Naive thymus-derived CD4-positive, alpha-beta T cell (primary cell): ENCODE measurements at regions of chr1 and their contacts with region 1.

Region 1: DNA sequence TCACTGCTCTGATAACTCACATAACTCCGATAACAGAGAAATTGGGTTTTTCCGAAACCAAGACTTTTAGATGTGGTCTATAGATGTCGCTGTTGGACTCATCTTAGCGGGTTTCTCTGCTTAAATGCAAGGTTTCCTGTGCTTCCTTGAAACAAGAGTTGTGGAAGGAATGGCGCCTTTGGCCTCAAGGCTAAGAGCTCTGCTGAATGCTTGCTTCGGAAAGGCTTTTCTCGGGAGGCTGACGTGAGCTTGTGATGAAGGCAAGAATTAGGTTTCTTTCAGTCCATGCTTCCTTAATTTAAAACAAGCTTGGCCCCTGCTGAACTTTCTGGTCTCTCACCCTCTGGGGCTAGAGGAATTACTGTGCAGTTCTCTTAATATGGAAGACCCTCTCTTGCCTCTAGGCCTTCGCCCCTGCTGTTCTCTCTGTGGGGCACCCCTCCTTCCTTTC is 113.5 kb downstream of the MAP3K21 start:
- DNase-seq: peak in 3 of 9 donors; percentile 2 to 19 (median 2)
- ATAC-seq: peak; percentile 32
- H3K4me3 ChIP-seq: no peak overlapping the region
- H3K4me3 Mint-ChIP-seq: no peak overlapping the region
- H3K27ac ChIP-seq: no peak overlapping the region
- H3K27ac Mint-ChIP-seq: no peak overlapping the region
- H3K4me1 ChIP-seq: no peaks in the 10 kb centered on the region
- H3K4me1 Mint-ChIP-seq: no peaks in the 10 kb centered on the region
- H3K27me3 ChIP-seq: no peaks in the 10 kb centered on the region
- H3K27me3 Mint-ChIP-seq: peaks cover 9 to 29% (median 26%) of the 10 kb centered on the region in 5 donors

Region 2: DNA sequence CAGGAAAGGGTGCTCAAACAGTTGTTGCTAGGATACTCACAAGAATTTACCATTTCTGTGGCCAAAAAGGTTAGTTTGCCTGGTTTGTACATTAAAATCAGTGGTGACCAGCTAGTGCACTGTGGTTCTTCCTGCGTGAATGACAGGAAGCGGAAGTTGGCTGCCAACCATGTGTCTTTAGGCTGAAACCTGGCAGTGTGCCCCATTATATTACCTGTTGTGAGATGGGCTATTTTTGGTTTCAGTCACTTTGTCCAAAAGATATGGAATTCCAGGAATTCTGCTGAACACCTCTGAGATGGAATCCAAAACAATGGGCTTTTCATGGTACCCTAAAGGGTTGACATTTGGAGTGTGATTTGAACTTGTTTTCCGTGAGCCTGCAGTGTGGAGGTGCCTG is 99.9 kb before region 1 on chr1:
- CTCF ChIA-PET with region 1: no interaction called
- POLR2A ChIA-PET with region 1: no interaction called
- intact Hi-C with region 1: no loop called
- DNase-seq: no peak
- ATAC-seq: no peak
- H3K4me3 ChIP-seq: no peak overlapping the region
- H3K4me3 Mint-ChIP-seq: no peak overlapping the region
- H3K27ac ChIP-seq: no peak overlapping the region
- H3K27ac Mint-ChIP-seq: no peak overlapping the region
- H3K4me1 ChIP-seq: no peaks in the 10 kb centered on the region
- H3K4me1 Mint-ChIP-seq: peaks cover 0 to 2% (median 0%) of the 10 kb centered on the region in 7 donors
- H3K27me3 ChIP-seq: no peaks in the 10 kb centered on the region
- H3K27me3 Mint-ChIP-seq: peaks cover 40 to 71% (median 57%) of the 10 kb centered on the region in 5 donors

Region 3: DNA sequence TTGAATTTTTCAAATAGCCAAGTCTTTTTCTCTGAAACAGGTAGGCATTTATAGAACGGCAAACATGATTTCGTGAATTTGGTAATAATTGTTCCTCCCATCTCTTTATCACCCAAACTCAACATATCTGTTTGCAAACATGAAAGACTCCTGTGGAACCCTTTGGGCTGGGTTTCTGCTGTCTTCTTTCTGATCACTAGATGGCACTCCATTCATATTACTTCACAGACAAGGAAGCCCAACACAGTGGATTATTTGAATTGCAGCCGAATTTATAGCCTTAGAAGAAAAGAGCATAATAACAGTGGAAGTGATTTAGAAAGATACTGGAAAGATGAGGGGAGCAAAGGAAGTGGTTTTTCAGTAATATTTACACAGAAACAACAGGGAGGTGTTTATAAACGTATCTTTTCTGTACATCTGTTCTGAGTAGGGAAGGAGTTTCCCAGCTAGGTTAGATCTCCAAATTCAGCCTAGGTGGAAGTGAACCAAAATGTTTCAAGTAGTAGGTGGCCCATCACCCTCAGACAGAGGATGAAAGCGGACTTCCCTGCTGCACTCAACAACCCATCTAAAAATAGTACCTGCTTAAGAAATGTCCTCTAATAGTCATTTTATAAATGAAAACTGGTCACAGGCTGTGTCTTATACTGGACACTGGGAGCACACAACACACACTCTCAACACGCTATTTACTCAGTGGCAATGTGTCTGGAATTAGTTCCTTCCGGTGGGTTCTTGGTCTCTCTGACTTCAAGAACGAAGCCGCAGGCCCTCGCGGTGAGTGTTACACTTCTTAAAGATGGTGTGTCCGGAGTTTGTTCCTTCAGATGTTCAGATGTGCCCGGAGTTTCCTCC is 45.9 kb before region 1 on chr1:
- CTCF ChIA-PET with region 1: no interaction called
- POLR2A ChIA-PET with region 1: no interaction called
- intact Hi-C with region 1: loop called in 1 of 2 experiments (anchors 2 kb)
- DNase-seq: peak in 5 of 9 donors; percentile 9 to 36 (median 17)
- ATAC-seq: peak; percentile 61
- H3K4me3 ChIP-seq: no peak overlapping the region
- H3K4me3 Mint-ChIP-seq: no peak overlapping the region
- H3K27ac ChIP-seq: no peak overlapping the region
- H3K27ac Mint-ChIP-seq: no peak overlapping the region
- H3K4me1 ChIP-seq: no peaks in the 10 kb centered on the region
- H3K4me1 Mint-ChIP-seq: no peaks in the 10 kb centered on the region
- H3K27me3 ChIP-seq: peaks cover 0 to 3% of the 10 kb centered on the region in 2 donors
- H3K27me3 Mint-ChIP-seq: peaks cover 27 to 45% (median 38%) of the 10 kb centered on the region in 5 donors

Region 4: DNA sequence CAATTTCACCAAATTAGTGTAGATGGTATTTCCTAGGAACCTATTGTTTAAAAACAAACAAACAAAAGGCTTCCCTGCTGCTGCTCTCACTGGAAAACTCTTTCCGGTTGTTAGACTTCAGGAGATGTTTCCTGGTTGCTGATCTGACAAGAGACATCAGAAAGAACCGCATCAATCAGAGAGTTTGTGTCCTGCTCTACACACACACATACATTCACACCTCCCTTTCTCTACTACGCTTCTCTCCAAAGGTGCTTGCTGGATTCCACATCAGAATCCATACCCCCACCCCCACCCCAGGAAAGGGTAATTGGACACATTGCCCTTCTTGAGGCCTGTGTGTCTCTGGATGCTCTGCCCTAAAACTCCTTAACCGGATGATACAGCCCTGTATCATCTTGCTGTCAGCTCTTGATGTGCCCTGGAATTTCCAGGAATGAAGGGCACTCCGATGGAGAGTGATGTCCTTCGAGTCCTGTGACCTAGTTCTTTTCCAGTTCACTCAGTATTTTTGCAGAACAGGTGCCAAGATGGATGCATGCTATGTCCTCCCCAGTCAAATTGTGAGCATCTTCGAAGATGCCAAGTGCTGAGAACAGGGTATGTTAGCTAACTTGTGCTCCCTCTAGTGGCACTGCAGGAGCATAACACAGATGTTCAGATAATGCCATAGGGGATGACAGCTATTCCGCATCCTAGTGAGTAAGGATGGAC is 349.8 kb after region 1 on chr1:
- CTCF ChIA-PET with region 1: no interaction called
- POLR2A ChIA-PET with region 1: no interaction called
- intact Hi-C with region 1: loop called in 1 of 2 experiments (anchors 1 kb)
- DNase-seq: peak in 6 of 9 donors; percentile 21 to 49 (median 33)
- ATAC-seq: peak; percentile 74
- H3K4me3 ChIP-seq: no peak overlapping the region
- H3K4me3 Mint-ChIP-seq: no peak overlapping the region
- H3K27ac ChIP-seq: no peak overlapping the region
- H3K27ac Mint-ChIP-seq: no peak overlapping the region
- H3K4me1 ChIP-seq: no peaks in the 10 kb centered on the region
- H3K4me1 Mint-ChIP-seq: no peaks in the 10 kb centered on the region
- H3K27me3 ChIP-seq: no peaks in the 10 kb centered on the region
- H3K27me3 Mint-ChIP-seq: peaks cover 14 to 35% (median 31%) of the 10 kb centered on the region in 5 donors

Region 5: DNA sequence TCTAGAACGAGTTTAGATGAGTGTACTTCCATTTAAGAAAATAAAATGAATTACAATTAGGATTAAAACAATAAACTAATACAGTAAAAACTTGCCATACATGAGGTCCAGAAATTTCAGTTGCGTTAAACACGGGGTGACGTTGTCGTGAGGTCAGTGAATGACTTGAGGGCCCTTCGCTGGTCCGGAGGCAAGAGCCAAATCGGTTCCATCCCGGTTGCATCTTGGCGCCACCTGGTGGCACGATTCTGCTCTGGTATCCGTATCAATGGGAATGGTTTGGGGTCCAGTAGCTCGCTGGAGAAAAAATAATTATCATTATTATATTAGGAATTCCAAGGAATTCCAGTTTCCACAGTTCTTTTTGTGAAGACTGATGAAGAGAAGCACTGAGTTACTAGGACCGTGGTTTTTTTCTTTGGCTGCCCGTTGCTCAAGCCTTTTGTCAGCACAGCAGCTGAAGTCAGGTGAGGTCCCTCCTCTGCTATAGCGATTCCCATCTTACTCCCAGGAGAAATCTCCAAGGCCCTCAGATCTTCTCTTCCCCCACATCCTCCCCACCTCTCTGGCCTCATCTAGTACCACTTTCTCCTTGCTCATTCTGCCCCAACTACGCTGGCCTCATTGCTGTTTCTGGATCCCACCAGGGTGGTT is 624.9 kb after region 1 on chr1:
- CTCF ChIA-PET with region 1: interaction called, 3 read pairs
- POLR2A ChIA-PET with region 1: no interaction called
- intact Hi-C with region 1: loop called in 1 of 2 experiments (anchors 1 kb)
- DNase-seq: peak; percentile 22 to 70 (median 40)
- ATAC-seq: no peak
- H3K4me3 ChIP-seq: no peak overlapping the region
- H3K4me3 Mint-ChIP-seq: no peak overlapping the region
- H3K27ac ChIP-seq: no peak overlapping the region
- H3K27ac Mint-ChIP-seq: no peak overlapping the region
- H3K4me1 ChIP-seq: no peaks in the 10 kb centered on the region
- H3K4me1 Mint-ChIP-seq: no peaks in the 10 kb centered on the region
- H3K27me3 ChIP-seq: no peaks in the 10 kb centered on the region
- H3K27me3 Mint-ChIP-seq: peaks cover 5 to 29% (median 10%) of the 10 kb centered on the region in 5 donors